Activated naive CD4-positive, alpha-beta T cell treated with anti-CD3 and anti-CD28 coated beads for 36 hours (primary cell): ENCODE measurements at regions of chr5 and their contacts with region 1.

Region 1: DNA sequence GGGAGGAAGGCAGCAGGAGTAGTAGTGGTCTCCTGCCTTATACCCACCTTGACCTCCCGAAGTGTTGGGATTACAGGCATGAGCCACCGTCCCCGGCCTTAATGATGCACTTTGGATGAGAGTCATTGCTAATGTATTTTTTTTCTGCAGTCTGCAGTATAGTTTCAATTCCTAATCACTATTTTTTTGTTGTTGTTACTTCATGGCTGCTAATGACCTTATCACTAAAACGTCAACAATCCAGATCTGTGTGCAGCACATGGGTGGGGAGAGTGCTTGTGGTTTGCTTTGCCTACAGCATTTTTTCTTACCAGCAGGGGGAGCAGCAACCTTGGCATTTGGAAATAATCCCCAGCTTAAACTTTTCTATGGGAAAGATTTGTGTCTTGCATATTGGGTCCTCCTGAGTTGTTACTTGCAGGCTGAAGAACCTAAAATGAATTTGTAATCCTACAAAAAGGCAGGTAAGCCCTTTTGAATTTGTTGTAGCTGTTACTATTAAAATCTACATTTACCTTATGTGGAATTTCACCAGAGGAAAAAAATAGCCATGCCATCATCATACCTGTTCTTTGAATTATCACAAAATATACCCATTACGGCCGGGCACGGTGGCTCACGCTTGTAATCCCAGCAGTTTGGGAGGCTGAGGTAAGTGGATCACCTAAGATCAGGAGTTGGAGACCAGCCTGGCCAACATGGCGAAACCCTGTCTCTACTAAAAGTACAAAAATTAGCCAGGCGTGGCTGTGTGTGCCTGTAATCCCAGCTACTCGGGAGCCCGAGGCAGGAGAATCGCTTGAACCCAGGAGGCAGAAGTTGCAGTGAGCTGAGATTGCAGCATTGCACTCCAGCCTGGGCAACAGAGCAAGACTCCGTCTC is 6.3 kb upstream of the MED7 start:
- DNase-seq: peak; percentile 93
- H3K4me3 Mint-ChIP-seq: no peak overlapping the region
- H3K27ac Mint-ChIP-seq: peak overlapping the region; percentile 81
- H3K4me1 Mint-ChIP-seq: peaks cover 53% of the 10 kb centered on the region
- H3K27me3 Mint-ChIP-seq: no peaks in the 10 kb centered on the region

Region 2: GRCh38 chr5:157167214-157167621 is 18.2 kb after region 1 on chr5:
- CTCF ChIA-PET with region 1: interaction called, 12 read pairs
- intact Hi-C with region 1: loop called (anchors 1 kb)
- DNase-seq: peak; percentile 61
- H3K4me3 Mint-ChIP-seq: peak overlapping the region; percentile 64
- H3K27ac Mint-ChIP-seq: peak overlapping the region; percentile 100
- H3K4me1 Mint-ChIP-seq: peaks cover 79% of the 10 kb centered on the region
- H3K27me3 Mint-ChIP-seq: no peaks in the 10 kb centered on the region

Region 3: GRCh38 chr5:157180374-157181264 is 31.6 kb after region 1 on chr5 and contains the start of gene ITK:
- CTCF ChIA-PET with region 1: interaction called, 17 read pairs
- intact Hi-C with region 1: no loop called
- DNase-seq: no peak
- H3K4me3 Mint-ChIP-seq: peak within 1 kb of the TSS; percentile 98
- H3K27ac Mint-ChIP-seq: peak within 1 kb of the TSS; percentile 100
- H3K4me1 Mint-ChIP-seq: peaks cover 50% of the 10 kb centered on the region
- H3K27me3 Mint-ChIP-seq: no peaks in the 10 kb centered on the region
- total RNA-seq, gene ITK: 340 TPM

Region 4: GRCh38 chr5:157198277-157198986 is 49.5 kb after region 1 on chr5:
- CTCF ChIA-PET with region 1: interaction called, 7 read pairs
- intact Hi-C with region 1: loop called (anchors 2 kb)
- DNase-seq: peak; percentile 80
- H3K4me3 Mint-ChIP-seq: peak overlapping the region; percentile 48
- H3K27ac Mint-ChIP-seq: peak overlapping the region; percentile 100
- H3K4me1 Mint-ChIP-seq: peaks cover 93% of the 10 kb centered on the region
- H3K27me3 Mint-ChIP-seq: no peaks in the 10 kb centered on the region

Region 5: GRCh38 chr5:157225469-157226422 is 76.8 kb after region 1 on chr5:
- CTCF ChIA-PET with region 1: interaction called, 14 read pairs
- intact Hi-C with region 1: loop called (anchors 1 kb)
- DNase-seq: peak; percentile 65
- H3K4me3 Mint-ChIP-seq: peak overlapping the region; percentile 93
- H3K27ac Mint-ChIP-seq: peak overlapping the region; percentile 100
- H3K4me1 Mint-ChIP-seq: peaks cover 67% of the 10 kb centered on the region
- H3K27me3 Mint-ChIP-seq: no peaks in the 10 kb centered on the region

Region 6: GRCh38 chr5:157271740-157272271 is 122.8 kb after region 1 on chr5:
- CTCF ChIA-PET with region 1: interaction called, 20 read pairs
- intact Hi-C with region 1: no loop called
- DNase-seq: peak; percentile 96
- H3K4me3 Mint-ChIP-seq: peak overlapping the region; percentile 74
- H3K27ac Mint-ChIP-seq: peak overlapping the region; percentile 99
- H3K4me1 Mint-ChIP-seq: peaks cover 79% of the 10 kb centered on the region
- H3K27me3 Mint-ChIP-seq: no peaks in the 10 kb centered on the region

Region 7: DNA sequence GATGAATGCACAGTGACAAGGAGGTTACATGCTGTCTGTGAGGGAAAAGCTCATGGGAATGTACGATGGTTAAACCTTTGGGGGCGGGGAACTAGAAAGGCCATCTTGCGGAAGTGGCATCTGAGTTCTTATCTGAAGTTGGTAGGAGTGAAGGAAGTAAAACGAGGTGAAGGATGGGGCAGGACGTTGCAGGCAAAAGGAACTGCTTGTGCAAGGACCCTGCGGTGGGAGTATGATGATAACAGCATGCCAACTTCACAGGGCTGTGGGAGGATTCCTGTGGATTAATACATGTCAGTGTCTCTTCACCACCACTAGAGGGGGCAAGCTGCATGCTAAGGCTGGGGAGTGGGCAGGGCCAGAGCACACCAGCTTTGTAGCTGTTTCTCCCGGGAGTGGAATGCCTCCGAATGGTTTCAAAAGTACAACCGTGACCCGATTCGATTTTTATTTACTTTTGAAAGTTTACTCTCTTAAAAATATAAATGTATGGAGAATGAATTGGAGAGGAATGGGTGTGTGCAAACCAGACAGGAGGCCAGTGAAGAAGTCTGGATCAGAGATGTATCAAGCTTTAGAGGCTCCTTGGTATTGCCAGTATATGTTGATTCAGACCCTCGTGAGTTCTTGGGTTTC is 179.4 kb after region 1 on chr5:
- CTCF ChIA-PET with region 1: interaction called, 9 read pairs
- intact Hi-C with region 1: loop called (anchors 1 kb)
- DNase-seq: peak; percentile 69
- H3K4me3 Mint-ChIP-seq: peak overlapping the region; percentile 31
- H3K27ac Mint-ChIP-seq: peak overlapping the region; percentile 78
- H3K4me1 Mint-ChIP-seq: peaks cover 51% of the 10 kb centered on the region
- H3K27me3 Mint-ChIP-seq: no peaks in the 10 kb centered on the region

Region 8: DNA sequence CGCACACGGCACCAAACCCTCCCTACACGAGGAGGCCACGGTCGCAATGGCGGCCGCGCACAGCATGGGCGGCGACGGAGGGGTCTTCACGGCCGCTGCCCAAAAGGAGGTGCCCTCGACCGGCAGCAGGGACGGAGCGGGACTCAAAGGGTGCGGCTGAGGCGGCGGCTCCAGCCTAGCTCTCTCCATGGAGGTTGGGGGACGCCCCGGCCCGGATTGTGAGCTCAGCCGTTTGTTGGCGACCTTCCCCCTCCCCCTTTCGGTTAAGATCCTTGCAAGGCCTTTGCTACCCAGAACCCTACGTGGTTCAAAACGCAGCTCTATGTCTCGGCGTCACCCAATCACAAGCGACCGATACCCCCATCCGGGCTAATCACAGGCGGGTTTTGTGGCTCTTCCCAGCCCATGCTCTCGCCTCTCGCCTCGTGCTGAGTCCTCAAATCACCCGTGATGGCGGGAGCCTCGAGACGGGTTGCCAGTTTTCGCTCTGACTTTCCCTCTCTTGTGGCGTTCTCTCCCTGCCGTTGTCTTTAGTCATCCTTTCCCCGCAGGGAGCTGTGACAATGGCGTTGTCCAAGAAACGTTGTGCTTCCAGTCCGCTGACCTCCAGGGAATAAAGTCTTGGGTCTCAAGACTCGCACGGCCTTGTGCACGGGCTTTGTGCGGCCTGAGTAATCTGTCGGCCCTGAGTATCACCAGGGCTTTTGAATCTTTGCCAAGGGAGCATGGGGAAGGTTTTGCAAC is 541.9 kb after region 1 on chr5:
- CTCF ChIA-PET with region 1: no interaction called
- intact Hi-C with region 1: no loop called
- DNase-seq: no peak
- H3K4me3 Mint-ChIP-seq: no peak overlapping the region
- H3K27ac Mint-ChIP-seq: no peak overlapping the region
- H3K4me1 Mint-ChIP-seq: no peaks in the 10 kb centered on the region
- H3K27me3 Mint-ChIP-seq: peaks cover 12% of the 10 kb centered on the region